Kidney (tissue), 22 donors: ENCODE measurements at regions of chr5 and their contacts with region 1.

Region 1: GRCh38 chr5:54249210-54250028 is 61.0 kb downstream of the ARL15 start:
- DNase-seq: peak in 4 of 5 donors; percentile 33 to 61 (median 56)
- H3K4me3 ChIP-seq: no peak overlapping the region
- H3K27ac ChIP-seq: no peak overlapping the region
- H3K4me1 ChIP-seq: no peaks in the 10 kb centered on the region
- H3K27me3 ChIP-seq: no peaks in the 10 kb centered on the region
- CTCF ChIP-seq: no peak

Region 2: DNA sequence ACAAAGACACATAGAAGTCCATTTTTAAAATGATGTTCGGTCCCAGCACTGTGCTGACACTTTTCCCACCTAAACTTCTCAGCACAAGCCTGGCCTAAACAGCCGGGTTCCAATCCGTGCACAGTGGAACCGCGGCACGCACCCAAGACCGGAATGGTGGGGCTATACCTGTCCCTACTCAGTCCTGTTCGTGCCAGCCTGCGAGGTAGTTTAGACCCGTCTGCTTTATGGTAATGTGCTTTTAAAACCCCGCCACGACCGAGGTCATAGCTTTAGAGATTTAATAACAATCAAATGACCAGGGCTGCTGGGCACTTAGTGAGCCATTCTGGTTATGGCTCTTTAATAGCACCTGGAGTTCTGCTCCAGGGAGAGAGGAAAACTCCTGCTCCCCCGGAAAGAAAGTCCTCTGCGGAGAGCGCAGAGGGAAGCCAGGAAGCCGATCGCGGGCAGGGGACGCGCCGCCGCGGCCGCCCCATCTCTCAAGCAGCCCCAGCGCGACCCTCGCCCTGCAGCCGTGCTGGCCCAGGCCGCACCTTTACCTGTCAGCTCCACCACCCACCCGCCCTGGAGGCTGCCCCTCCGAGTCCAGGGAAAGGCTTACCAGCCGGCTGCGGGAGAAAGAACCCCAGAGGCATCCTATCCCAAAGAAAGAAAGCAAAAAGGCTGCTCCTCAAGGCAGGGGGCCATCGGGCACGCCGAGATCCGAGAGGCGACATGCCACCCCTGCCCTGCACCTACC is 60.4 kb after region 1 on chr5:
- intact Hi-C with region 1: loop called (anchors 10 kb)
- DNase-seq: peak in 4 of 5 donors; percentile 70 to 85 (median 73)
- H3K4me3 ChIP-seq: peak overlapping the region; percentile 81 to 94 (median 91)
- H3K27ac ChIP-seq: peak overlapping the region; percentile 80 to 93
- H3K4me1 ChIP-seq: peaks cover 0 to 6% (median 2%) of the 10 kb centered on the region in 3 donors
- H3K27me3 ChIP-seq: no peaks in the 10 kb centered on the region
- CTCF ChIP-seq: no peak

Region 3: GRCh38 chr5:54415896-54416601 is 166.6 kb after region 1 on chr5:
- intact Hi-C with region 1: loop called (anchors 10 kb)
- DNase-seq: no peak
- H3K4me3 ChIP-seq: no peak overlapping the region
- H3K27ac ChIP-seq: no peak overlapping the region
- H3K4me1 ChIP-seq: no peaks in the 10 kb centered on the region
- H3K27me3 ChIP-seq: no peaks in the 10 kb centered on the region
- CTCF ChIP-seq: no peak